Thyroid gland (tissue), 4 donors: ENCODE measurements at regions of chr3 and their contacts with region 1.

Region 1: DNA sequence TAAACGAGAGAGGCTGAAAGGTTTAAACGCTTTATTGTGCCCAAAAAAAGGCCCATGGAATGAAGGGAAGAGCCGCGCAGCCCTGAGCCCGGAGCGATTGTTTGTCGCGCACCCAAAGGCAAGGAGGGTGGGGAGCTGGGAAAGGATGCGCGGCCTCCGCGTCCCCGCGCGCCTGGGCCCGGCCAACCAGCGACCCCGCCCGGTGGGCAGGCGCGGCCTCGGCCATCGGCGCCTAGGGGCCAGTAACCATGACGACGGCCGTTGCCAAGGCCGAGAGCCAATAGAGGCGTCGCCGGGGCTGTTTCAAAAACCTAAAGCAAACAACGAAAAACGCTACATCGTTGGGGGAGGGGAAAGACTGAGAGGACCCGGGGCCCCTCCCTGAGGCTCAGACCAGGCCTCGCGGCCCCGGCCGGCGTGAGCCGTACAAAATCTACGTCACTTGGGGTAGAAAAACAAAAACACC is 36.1 kb downstream of the HMCES start:
- DNase-seq: peak; percentile 86 to 90
- H3K4me3 ChIP-seq: peak overlapping the region; percentile 78 to 80 (median 78)
- H3K27ac ChIP-seq: peak overlapping the region; percentile 81 to 99 (median 94)
- H3K4me1 ChIP-seq: peaks cover 13 to 32% of the 10 kb centered on the region in 2 donors
- H3K27me3 ChIP-seq: no peaks in the 10 kb centered on the region
- CTCF ChIP-seq: no peak
- POLR2A ChIP-seq: peak in 1 of 2 donors; percentile 27

Region 2: GRCh38 chr3:129278439-129278970 is 36.3 kb before region 1 on chr3 and contains the start of gene HMCES:
- intact Hi-C with region 1: loop called (anchors 5 kb)
- DNase-seq: peak; percentile 92 to 93
- H3K4me3 ChIP-seq: peak within 1 kb of the TSS; percentile 66 to 99 (median 85)
- H3K27ac ChIP-seq: peak within 1 kb of the TSS; percentile 87 to 95 (median 93)
- H3K4me1 ChIP-seq: peaks cover 5 to 13% of the 10 kb centered on the region in 2 donors
- H3K27me3 ChIP-seq: no peaks in the 10 kb centered on the region
- CTCF ChIP-seq: peak in 2 of 6 experiments; percentile 10 to 14
- POLR2A ChIP-seq: peak in 1 of 2 donors; percentile 80
- total RNA-seq, gene HMCES: 23.7 to 30.9 (median 26.0) TPM